ENCODE measurements at regions of chr7 and their contacts with region 1.

Region 1: DNA sequence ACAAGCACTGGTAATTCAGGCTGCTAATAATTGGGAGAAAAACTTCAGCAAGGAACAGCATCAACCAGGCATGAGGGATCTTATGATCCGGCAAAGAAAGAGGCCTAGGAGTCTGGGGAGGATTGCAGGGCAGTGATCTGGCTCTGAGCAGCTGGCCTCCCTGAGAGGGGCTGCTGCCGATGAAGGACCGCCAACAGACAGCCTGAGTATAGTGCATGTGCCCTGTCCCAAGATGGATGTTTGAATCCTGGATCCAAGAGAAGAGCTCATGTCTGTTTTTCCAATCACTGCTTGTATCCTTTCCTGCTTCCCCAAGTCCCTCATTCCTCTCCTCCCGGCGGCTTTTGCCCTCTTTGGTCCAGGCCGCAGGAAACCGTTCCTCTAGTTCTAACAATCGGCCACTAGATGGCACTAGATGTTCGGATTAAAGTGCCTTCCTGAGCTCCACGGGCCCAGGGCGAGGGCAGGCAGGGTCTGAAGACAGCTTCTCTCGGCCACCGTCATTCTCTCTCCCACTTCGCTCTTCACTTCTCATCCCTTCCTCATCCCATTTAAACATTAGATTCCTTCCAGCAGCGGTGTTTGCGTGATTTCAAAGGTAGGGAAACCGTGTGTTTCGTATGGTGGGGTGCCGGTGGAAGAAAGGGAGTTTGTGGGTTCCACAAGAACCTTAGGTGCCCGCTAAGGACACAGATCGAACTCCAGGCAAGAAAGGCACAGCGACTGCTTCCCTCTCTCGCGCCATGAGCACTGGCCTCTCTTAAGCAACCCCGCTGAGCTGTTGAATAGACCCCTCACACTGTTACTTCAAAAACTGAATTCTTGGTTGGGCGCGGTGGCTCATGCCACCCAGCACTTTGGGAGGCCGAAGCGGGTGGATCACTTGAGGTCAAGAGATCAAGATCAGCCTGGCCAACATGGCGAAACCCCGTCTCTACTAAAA is 82.4 kb downstream of the ADCYAP1R1 start:
- DNase-seq: no peak
- ATAC-seq: peak; percentile 100
- H3K4me3 ChIP-seq: no peak overlapping the region
- H3K27ac ChIP-seq: no peak overlapping the region
- H3K4me1 ChIP-seq: no peaks in the 10 kb centered on the region
- H3K27me3 ChIP-seq: no peaks in the 10 kb centered on the region; the same call in 1 of the 2 replicates
- CTCF ChIP-seq: peak; percentile 87

Region 2: DNA sequence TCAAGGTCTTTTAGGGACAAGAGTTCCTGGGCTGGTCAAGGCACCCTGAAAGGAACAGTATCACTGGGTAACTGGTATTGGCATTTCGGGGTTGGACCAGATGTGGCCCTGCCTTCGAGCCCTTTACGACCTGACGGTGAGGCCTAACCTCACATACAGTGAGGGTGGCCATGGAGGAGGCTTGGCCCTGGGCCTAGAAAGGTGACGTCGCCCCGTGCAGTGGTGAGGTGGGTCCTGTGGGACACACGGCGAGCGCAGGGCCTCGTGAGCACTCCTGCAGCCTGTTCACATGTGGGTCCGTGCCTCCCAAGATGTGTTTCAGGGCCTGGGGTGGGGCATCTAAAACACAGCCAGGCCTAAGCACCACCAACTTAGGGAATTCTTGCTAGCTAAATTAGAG is 488.4 kb before region 1 on chr7:
- CTCF ChIA-PET with region 1: no interaction called
- POLR2A ChIA-PET with region 1: no interaction called
- in situ Hi-C with region 1: no loop called
- intact Hi-C with region 1: no loop called
- DNase-seq: no peak
- ATAC-seq: 0 out of 2 replicates have a peak, but pooled peaks have one; percentile 5
- H3K4me3 ChIP-seq: no peak overlapping the region
- H3K27ac ChIP-seq: no peak overlapping the region
- H3K4me1 ChIP-seq: no peaks in the 10 kb centered on the region
- H3K27me3 ChIP-seq: no peaks in the 10 kb centered on the region
- CTCF ChIP-seq: no peak

Region 3: GRCh38 chr7:31336202-31337001 is 201.9 kb after region 1 on chr7:
- CTCF ChIA-PET with region 1: no interaction called
- POLR2A ChIA-PET with region 1: no interaction called
- in situ Hi-C with region 1: no loop called
- intact Hi-C with region 1: loop called (anchors 10 kb)
- DNase-seq: no peak
- ATAC-seq: peak; percentile 72
- H3K4me3 ChIP-seq: peak overlapping the region in 1 of 2 experiments; percentile 9; a peak in 1 of 4 replicates
- H3K27ac ChIP-seq: no peak overlapping the region
- H3K4me1 ChIP-seq: no peaks in the 10 kb centered on the region
- H3K27me3 ChIP-seq: peaks cover 20% of the 10 kb centered on the region
- CTCF ChIP-seq: peak; percentile 61

Region 4: DNA sequence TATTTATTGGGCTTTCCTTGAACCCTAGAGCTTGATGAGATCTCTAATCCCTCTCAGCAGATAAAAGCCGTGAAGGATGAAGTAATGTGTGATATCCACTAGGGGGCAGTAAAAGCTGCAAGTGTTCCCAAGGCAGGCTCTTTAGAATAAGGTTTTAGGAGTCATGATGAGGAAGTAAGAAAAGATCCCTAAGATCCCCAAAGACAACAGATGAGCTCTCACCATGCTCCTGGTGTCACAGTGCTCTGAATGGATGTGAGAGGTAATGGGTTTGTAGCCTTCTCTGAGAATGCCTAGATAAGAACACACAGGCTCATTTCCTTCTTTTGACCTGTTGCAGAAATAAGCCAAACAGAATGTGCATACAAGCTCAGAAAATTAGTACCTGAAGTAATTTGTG is 308.9 kb after region 1 on chr7:
- CTCF ChIA-PET with region 1: interaction called, 9 read pairs
- POLR2A ChIA-PET with region 1: no interaction called
- in situ Hi-C with region 1: no loop called
- intact Hi-C with region 1: loop called (anchors 5 kb)
- DNase-seq: peak; percentile 30
- ATAC-seq: peak; percentile 84
- H3K4me3 ChIP-seq: no peak overlapping the region
- H3K27ac ChIP-seq: no peak overlapping the region
- H3K4me1 ChIP-seq: no peaks in the 10 kb centered on the region
- H3K27me3 ChIP-seq: peaks cover 2% of the 10 kb centered on the region; the same call in 1 of the 2 replicates
- CTCF ChIP-seq: peak; percentile 87

Region 5: DNA sequence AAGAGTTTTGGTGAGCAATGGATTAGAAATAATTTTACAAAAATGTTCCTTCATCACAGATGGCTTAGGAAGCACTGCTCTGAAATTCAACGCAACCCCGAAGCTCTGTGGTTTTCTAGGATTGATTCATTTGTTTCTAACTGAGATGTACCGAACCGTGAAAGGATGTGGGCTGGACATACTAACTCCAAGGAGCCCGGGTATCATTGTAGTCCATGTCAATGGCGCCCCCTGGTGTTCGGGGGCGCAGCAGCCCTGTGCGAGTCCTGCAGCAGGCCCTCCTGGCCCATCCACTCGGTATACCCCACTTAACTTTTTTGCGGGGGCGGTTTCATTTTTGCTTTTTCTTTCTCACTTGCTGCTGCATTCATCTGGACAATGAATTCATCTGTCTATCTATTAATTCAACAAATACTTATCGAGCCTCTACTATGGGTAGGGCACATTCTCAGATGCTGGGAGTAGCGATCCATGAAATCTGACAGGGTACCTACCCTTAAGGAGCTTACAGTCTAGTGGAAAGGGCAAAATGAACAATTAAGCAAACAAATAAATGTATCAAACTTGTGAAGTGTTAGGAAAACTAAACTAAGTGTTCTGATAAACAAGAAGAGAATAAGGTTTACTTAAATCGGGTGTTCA is 354.2 kb after region 1 on chr7:
- CTCF ChIA-PET with region 1: no interaction called
- POLR2A ChIA-PET with region 1: no interaction called
- in situ Hi-C with region 1: no loop called
- intact Hi-C with region 1: loop called (anchors 2 kb)
- DNase-seq: peak; percentile 48
- ATAC-seq: peak; percentile 93
- H3K4me3 ChIP-seq: no peak overlapping the region
- H3K27ac ChIP-seq: no peak overlapping the region
- H3K4me1 ChIP-seq: no peaks in the 10 kb centered on the region
- H3K27me3 ChIP-seq: no peaks in the 10 kb centered on the region
- CTCF ChIP-seq: peak; percentile 90

Region 6: DNA sequence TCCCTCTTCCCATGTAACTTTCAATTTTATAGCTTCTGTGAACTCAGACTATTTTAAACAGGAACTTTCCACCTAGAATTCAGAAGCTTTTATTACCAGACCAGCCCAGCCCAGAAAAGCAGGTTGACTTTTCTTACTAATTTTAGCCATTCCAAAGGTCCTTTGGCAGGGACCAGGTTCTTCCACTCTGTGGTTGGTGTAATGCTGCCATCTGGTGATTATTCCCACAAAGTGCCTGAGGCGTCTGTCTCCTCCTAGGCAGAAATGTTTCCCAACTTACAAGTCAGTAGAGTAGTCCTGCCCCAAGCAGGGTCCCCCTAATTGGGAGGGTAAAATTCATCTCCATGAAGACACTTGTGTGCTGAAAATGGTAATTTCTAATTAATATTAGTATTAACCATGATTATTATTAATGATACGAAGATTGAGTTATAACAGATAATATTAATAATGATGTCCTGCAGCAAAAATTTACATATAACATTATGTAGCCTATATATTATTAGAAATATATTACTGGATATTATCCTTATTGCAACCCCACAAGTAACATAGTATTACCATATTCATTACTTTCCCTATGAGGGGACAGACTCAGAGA is 499.5 kb after region 1 on chr7:
- CTCF ChIA-PET with region 1: interaction called, 9 read pairs
- POLR2A ChIA-PET with region 1: no interaction called
- in situ Hi-C with region 1: no loop called
- intact Hi-C with region 1: loop called (anchors 2 kb)
- DNase-seq: peak; percentile 54
- ATAC-seq: peak; percentile 96
- H3K4me3 ChIP-seq: no peak overlapping the region
- H3K27ac ChIP-seq: no peak overlapping the region
- H3K4me1 ChIP-seq: no peaks in the 10 kb centered on the region
- H3K27me3 ChIP-seq: no peaks in the 10 kb centered on the region
- CTCF ChIP-seq: peak; percentile 84

Region 7: DNA sequence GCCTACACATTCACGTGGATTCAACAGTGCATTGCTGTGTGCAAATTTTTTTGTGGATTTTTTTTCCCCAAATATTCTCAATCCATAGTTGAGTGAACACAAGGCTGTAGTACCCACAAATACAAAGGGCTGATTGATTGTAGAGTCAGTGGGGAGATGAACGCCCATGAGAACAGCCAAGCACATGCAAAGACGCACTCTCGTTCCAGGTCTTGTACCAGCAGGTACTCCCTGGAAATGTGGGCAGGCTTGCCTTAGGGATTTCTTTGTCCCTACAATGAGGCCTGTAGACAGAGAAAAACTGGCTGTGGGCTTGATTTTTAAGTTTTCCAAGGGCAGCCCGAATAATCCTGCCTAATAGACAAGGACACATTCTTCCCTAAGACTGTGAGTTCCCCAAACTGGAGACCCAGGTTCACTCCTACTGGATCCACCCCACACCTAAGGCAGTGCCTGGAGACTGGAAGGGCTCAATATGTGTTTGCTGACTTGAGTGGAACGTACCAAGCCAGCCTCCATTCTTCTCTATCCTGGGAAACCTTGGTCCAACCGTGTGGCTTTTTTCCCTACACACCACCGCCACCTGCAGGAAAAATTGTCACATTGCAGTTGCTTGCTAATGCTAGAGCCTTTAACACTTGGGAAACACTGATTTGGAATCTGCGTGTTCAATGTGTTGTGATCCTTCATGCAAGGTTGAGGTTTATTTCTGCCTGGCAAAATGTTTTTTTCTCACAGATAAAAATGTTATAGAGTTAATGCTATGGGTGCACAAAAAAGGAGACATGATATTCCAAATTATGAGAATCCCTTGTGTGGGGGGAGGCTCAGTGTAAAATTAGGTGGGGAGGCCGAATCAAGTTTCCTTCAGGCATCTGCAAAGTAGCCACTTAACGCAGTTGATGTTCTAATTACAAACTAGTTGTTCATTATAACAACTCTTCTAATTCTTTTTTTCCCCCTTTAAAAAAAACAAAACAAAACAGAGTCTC is 601.8 kb after region 1 on chr7:
- CTCF ChIA-PET with region 1: interaction called, 4 read pairs
- POLR2A ChIA-PET with region 1: no interaction called
- in situ Hi-C with region 1: no loop called
- intact Hi-C with region 1: loop called (anchors 2 kb)
- DNase-seq: peak; percentile 41
- ATAC-seq: peak; percentile 92
- H3K4me3 ChIP-seq: no peak overlapping the region
- H3K27ac ChIP-seq: no peak overlapping the region
- H3K4me1 ChIP-seq: no peaks in the 10 kb centered on the region
- H3K27me3 ChIP-seq: peaks cover 3% of the 10 kb centered on the region; the same call in 1 of the 2 replicates
- CTCF ChIP-seq: peak; percentile 92

Region 8: GRCh38 chr7:32218154-32218467 is 1083.6 kb after region 1 on chr7:
- CTCF ChIA-PET with region 1: no interaction called
- POLR2A ChIA-PET with region 1: no interaction called
- in situ Hi-C with region 1: no loop called
- intact Hi-C with region 1: loop called (anchors 10 kb)
- DNase-seq: no peak
- ATAC-seq: no peak
- H3K4me3 ChIP-seq: no peak overlapping the region
- H3K27ac ChIP-seq: no peak overlapping the region
- H3K4me1 ChIP-seq: no peaks in the 10 kb centered on the region
- H3K27me3 ChIP-seq: peaks cover 12% of the 10 kb centered on the region
- CTCF ChIP-seq: no peak